Caco-2 (cell line): ENCODE measurements at regions of chr19 and their contacts with region 1.

Region 1: DNA sequence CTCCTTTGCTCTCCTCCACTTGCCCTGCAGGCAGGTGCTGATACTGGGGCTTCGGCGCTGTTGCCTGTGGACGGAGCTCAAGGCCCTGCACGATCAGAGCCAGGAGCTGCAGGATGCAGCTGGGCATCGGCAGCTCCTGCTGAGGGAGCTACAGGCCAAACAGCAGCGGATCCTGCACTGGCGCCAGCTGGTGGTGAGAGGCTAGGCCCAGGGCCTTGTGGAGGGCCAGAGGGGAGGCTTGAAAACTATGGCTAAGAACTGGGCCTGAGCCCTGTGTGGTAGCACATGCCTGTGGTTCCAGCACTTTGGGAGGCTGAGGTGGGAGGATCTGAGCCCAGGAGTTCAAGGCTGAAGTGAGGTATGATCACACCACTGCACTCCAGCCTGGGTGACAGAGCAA is 6.3 kb downstream of the HAUS5 start:
- DNase-seq: peak in 1 of 2 experiments; percentile 33
- H3K4me3 ChIP-seq: no peak overlapping the region
- H3K4me3 Mint-ChIP-seq: no peak overlapping the region
- H3K27ac Mint-ChIP-seq: no peak overlapping the region
- H3K4me1 ChIP-seq: no peaks in the 10 kb centered on the region
- H3K4me1 Mint-ChIP-seq: no peaks in the 10 kb centered on the region
- H3K27me3 ChIP-seq: no peaks in the 10 kb centered on the region
- H3K27me3 Mint-ChIP-seq: no peaks in the 10 kb centered on the region
- CTCF ChIP-seq: peak in 1 of 2 experiments; percentile 37

Region 2: GRCh38 chr19:35330475-35330874 is 288.4 kb before region 1 on chr19:
- CTCF ChIA-PET with region 1: no interaction called
- POLR2A ChIA-PET with region 1: no interaction called
- intact Hi-C with region 1: no loop called
- DNase-seq: no peak
- H3K4me3 ChIP-seq: no peak overlapping the region
- H3K4me3 Mint-ChIP-seq: no peak overlapping the region
- H3K27ac Mint-ChIP-seq: no peak overlapping the region
- H3K4me1 ChIP-seq: no peaks in the 10 kb centered on the region
- H3K4me1 Mint-ChIP-seq: no peaks in the 10 kb centered on the region
- H3K27me3 ChIP-seq: no peaks in the 10 kb centered on the region; the same call in 1 of the 2 replicates
- H3K27me3 Mint-ChIP-seq: peaks cover 9% of the 10 kb centered on the region
- CTCF ChIP-seq: no peak

Region 3: GRCh38 chr19:35545001-35545911 is 73.6 kb before region 1 on chr19 and contains the start of gene TMEM147:
- CTCF ChIA-PET with region 1: no interaction called
- POLR2A ChIA-PET with region 1: no interaction called
- intact Hi-C with region 1: no loop called
- DNase-seq: peak; percentile 91 to 96
- H3K4me3 ChIP-seq: peak within 1 kb of the TSS; percentile 90
- H3K4me3 Mint-ChIP-seq: peak within 1 kb of the TSS; percentile 95
- H3K27ac Mint-ChIP-seq: peak within 1 kb of the TSS; percentile 91
- H3K4me1 ChIP-seq: peaks cover 14% of the 10 kb centered on the region
- H3K4me1 Mint-ChIP-seq: peaks cover 24% of the 10 kb centered on the region
- H3K27me3 ChIP-seq: no peaks in the 10 kb centered on the region
- H3K27me3 Mint-ChIP-seq: no peaks in the 10 kb centered on the region
- CTCF ChIP-seq: no peak
- total RNA-seq, gene TMEM147: 126 and 140 TPM in 2 replicates

Region 4: DNA sequence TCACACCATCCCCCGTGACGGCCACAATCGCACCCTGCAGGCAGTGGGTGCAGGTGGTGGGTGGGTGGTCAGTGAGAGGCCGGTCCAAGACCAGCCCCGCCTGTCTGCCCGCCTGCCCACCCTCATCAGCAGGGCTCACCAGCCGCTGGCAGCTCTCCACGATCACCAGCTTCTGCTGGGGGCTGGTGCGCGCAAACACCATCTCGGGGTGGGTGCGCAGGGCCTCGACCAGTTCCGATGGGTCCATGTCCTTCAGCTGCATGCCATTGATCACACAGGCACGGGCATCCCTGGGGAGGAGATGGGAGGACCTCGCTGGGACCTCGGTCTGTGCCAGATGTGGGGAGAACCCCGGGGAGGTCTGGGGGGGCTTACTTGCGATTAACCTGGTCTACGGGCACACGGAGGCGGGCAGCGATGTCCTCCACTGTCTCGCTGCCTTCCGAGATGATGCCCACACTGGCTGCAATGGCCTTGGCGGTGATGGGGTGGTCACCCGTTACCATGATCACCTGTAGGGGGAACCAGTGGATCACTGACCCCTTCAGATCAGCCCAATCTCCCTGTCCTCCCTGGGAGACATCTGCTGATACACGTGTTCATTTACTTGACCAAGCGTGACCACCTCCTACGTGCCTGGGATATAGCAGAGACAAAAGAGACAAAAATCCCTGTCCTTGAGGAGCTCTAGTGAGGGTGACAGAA is 63.4 kb before region 1 on chr19:
- CTCF ChIA-PET with region 1: interaction called, 15 read pairs
- POLR2A ChIA-PET with region 1: no interaction called
- intact Hi-C with region 1: no loop called
- DNase-seq: peak in 1 of 2 experiments; percentile 69
- H3K4me3 ChIP-seq: no peak overlapping the region
- H3K4me3 Mint-ChIP-seq: no peak overlapping the region
- H3K27ac Mint-ChIP-seq: no peak overlapping the region
- H3K4me1 ChIP-seq: 0 out of 2 replicates have a peak, but pooled peaks cover 5% of the 10 kb centered on the region
- H3K4me1 Mint-ChIP-seq: no peaks in the 10 kb centered on the region
- H3K27me3 ChIP-seq: no peaks in the 10 kb centered on the region
- H3K27me3 Mint-ChIP-seq: peaks cover 14% of the 10 kb centered on the region
- CTCF ChIP-seq: peak; percentile 42 to 56

Region 5: DNA sequence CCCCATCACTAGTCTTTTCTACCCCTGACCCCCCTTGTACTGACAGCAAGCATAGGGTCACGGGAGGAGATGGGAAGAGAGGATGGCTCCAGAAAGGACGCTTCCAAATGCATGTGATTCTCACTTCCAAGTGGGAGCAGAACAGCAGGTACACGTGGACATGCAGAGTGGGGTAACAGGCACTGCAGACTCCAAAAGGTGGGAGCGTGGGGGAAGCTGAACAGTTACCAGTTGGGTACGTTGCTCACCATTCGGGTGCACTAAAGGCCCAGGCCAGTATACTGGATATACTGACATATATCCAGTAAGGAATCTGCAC is 20.4 kb after region 1 on chr19:
- CTCF ChIA-PET with region 1: no interaction called
- POLR2A ChIA-PET with region 1: interaction called, 12 read pairs
- intact Hi-C with region 1: no loop called
- DNase-seq: no peak
- H3K4me3 ChIP-seq: no peak overlapping the region
- H3K4me3 Mint-ChIP-seq: no peak overlapping the region
- H3K27ac Mint-ChIP-seq: no peak overlapping the region
- H3K4me1 ChIP-seq: peaks cover 11% of the 10 kb centered on the region
- H3K4me1 Mint-ChIP-seq: no peaks in the 10 kb centered on the region
- H3K27me3 ChIP-seq: no peaks in the 10 kb centered on the region
- H3K27me3 Mint-ChIP-seq: no peaks in the 10 kb centered on the region
- CTCF ChIP-seq: no peak

Region 6: DNA sequence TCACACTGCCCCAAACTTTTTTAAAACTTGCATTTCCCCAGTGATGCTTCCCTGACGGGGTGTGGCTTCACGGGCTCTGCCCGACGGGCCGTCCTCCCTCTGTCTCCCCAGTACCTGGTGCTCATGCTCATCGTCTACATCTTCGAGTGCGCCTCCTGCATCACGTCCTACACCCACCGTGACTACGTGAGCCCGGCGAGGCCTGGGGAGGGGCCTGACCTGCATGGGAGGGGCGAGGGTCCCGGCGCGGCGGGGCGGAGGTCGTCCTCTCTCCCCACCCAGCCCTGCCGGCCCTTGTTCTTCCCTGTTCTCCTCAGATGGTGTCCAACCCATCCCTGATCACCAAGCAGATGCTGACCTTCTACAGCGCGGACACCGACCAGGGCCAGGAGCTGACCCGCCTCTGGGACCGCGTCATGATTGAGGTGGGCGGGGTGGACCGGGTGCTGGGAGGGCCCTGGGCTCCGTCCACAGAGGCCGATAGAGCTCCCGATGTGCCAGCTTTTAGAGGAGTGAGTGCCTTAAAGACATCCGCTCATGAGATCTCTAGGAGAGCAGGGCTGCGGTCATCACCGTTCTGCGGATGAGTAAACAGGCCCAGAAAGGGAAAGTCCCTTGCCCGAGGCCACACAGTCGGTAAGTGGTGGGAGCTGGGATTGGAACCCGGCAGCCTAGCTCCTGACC is 54.4 kb after region 1 on chr19:
- CTCF ChIA-PET with region 1: no interaction called
- POLR2A ChIA-PET with region 1: no interaction called
- intact Hi-C with region 1: no loop called
- DNase-seq: peak; percentile 66 to 68
- H3K4me3 ChIP-seq: peak overlapping the region; percentile 52
- H3K4me3 Mint-ChIP-seq: peak overlapping the region; percentile 81
- H3K27ac Mint-ChIP-seq: peak overlapping the region; percentile 75
- H3K4me1 ChIP-seq: peaks cover 9% of the 10 kb centered on the region; the same call in 1 of the 2 replicates
- H3K4me1 Mint-ChIP-seq: peaks cover 29% of the 10 kb centered on the region
- H3K27me3 ChIP-seq: no peaks in the 10 kb centered on the region
- H3K27me3 Mint-ChIP-seq: peaks cover 12% of the 10 kb centered on the region
- CTCF ChIP-seq: no peak